Left cardiac atrium (tissue), 4 donors: ENCODE measurements at regions of chr15 and their contacts with region 1.

Region 1: GRCh38 chr15:31338879-31339557 is 12.4 kb downstream of the KLF13 start:
- DNase-seq: peak; percentile 74
- ATAC-seq: peak; percentile 72 to 82

Region 2: GRCh38 chr15:31391687-31392671 is 53.0 kb after region 1 on chr15:
- intact Hi-C with region 1: loop called in 1 of 2 experiments (anchors 10 kb)
- DNase-seq: peak; percentile 86
- ATAC-seq: peak; percentile 83 to 87